ENCODE measurements at regions of chr3 and their contacts with region 1.

Region 1: GRCh38 chr3:73624821-73625665 is at the start of gene PDZRN3:
- DNase-seq: peak; percentile 71 to 78
- ATAC-seq: peak; percentile 40 to 56 (median 47)
- H3K4me3 ChIP-seq: peak within 1 kb of the TSS; percentile 81
- H3K27ac ChIP-seq: peak within 1 kb of the TSS; percentile 91
- H3K4me1 ChIP-seq: peaks cover 27% of the 10 kb centered on the region
- H3K27me3 ChIP-seq: no peaks in the 10 kb centered on the region
- CTCF ChIP-seq: no peak
- total RNA-seq, gene PDZRN3: 13.2 to 39.3 (median 17.2) TPM

Region 2: DNA sequence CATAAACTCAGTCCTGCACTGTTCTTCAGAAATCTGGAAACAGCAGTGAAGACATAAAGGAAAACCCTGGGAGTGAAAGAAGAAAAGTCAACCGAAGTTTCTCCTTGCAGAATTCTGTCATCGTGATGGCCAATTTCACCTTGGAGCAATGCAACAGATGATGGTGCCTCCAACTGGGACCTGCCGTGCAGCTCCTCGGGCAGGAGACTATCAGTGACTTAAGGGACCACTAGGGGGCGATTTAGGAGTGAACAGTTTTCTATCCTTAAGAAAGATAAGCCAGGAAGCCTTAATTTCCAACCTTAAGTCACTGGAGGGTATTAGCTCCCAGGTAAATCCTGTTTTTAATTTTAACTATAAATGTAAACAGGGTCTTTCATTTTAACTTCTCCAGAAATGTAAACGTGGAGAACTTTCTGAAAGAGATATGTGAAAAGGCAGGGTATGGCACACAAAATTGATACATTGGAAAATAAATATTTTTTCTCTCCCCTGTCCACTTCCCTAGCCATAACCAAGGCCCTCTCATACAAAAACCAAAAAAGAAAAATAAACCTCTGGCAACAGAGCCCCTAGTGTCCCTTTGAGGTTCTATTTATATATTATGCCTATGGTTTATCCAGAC is 116.6 kb before region 1 on chr3:
- intact Hi-C with region 1: loop called (anchors 2 to 5 kb)
- DNase-seq: no peak
- ATAC-seq: peak; percentile 71 to 85 (median 80)
- H3K4me3 ChIP-seq: no peak overlapping the region
- H3K27ac ChIP-seq: peak overlapping the region; percentile 70
- H3K4me1 ChIP-seq: peaks cover 58% of the 10 kb centered on the region
- H3K27me3 ChIP-seq: no peaks in the 10 kb centered on the region
- CTCF ChIP-seq: peak; percentile 81

Region 3: GRCh38 chr3:73569246-73569760 is 55.7 kb before region 1 on chr3:
- intact Hi-C with region 1: loop called in 1 of 2 experiments (anchors 5 kb)
- DNase-seq: no peak
- ATAC-seq: peak in 2 of 4 donors; percentile 11 to 16
- H3K4me3 ChIP-seq: no peak overlapping the region
- H3K27ac ChIP-seq: peak overlapping the region; percentile 80
- H3K4me1 ChIP-seq: peaks cover 46% of the 10 kb centered on the region
- H3K27me3 ChIP-seq: no peaks in the 10 kb centered on the region
- CTCF ChIP-seq: no peak

Region 4: GRCh38 chr3:73580343-73580742 is 44.7 kb before region 1 on chr3:
- intact Hi-C with region 1: loop called (anchors 5 kb)
- DNase-seq: no peak
- ATAC-seq: peak in 3 of 4 donors; percentile 43 to 59 (median 55)
- H3K4me3 ChIP-seq: no peak overlapping the region
- H3K27ac ChIP-seq: peak overlapping the region; percentile 70
- H3K4me1 ChIP-seq: peaks cover 71% of the 10 kb centered on the region
- H3K27me3 ChIP-seq: no peaks in the 10 kb centered on the region
- CTCF ChIP-seq: no peak

Region 5: DNA sequence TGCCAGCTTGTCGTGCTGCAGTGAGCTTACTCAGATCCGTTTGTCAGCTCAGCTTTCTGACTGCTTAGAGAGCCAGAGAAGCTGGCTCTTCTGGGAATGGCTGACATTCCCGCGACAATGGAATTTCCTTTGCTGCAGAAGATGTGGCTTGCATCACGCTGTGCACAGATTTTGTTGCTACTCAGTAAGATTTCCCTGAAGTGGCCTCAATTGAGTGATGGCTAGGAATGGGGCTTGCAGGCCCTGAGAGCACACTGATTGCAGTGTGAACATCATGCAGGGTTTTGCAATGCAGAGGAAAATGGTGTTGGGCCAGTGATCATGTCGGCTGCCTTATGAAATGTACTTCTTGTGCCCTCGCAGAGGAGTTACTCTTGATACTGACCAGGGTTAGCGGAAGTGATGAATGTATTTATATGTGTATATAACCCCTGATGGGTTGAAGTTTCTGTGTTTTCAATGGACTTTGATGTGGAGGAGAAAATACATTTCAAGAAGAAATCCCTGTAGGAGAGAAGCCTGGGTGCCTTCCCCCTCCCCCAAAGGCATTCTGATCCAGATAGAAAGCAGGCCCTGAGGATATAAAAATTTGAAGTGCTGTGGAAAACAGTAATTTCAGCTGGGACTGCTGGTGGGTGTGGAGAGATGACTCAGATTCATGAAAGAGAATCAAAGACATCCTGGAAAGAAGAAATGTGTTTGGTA is 102.2 kb after region 1 on chr3:
- intact Hi-C with region 1: loop called in 1 of 2 experiments (anchors 5 kb)
- DNase-seq: peak; percentile 46 to 50
- ATAC-seq: peak in 3 of 4 donors; percentile 51 to 68 (median 54)
- H3K4me3 ChIP-seq: no peak overlapping the region
- H3K27ac ChIP-seq: peak overlapping the region; percentile 60
- H3K4me1 ChIP-seq: peaks cover 36% of the 10 kb centered on the region
- H3K27me3 ChIP-seq: no peaks in the 10 kb centered on the region
- CTCF ChIP-seq: no peak

Region 6: GRCh38 chr3:73784686-73785392 is 159.8 kb after region 1 on chr3:
- intact Hi-C with region 1: loop called in 1 of 2 experiments (anchors 5 kb)
- DNase-seq: no peak
- ATAC-seq: peak; percentile 47 to 78 (median 58)
- H3K4me3 ChIP-seq: no peak overlapping the region
- H3K27ac ChIP-seq: peak overlapping the region; percentile 66
- H3K4me1 ChIP-seq: peaks cover 9% of the 10 kb centered on the region
- H3K27me3 ChIP-seq: no peaks in the 10 kb centered on the region
- CTCF ChIP-seq: no peak

Region 7: GRCh38 chr3:73848173-73848906 is 223.3 kb after region 1 on chr3:
- intact Hi-C with region 1: loop called (anchors 5 kb)
- DNase-seq: no peak
- ATAC-seq: peak in 3 of 4 donors; percentile 46 to 81 (median 62)
- H3K4me3 ChIP-seq: no peak overlapping the region
- H3K27ac ChIP-seq: no peak overlapping the region
- H3K4me1 ChIP-seq: no peaks in the 10 kb centered on the region
- H3K27me3 ChIP-seq: no peaks in the 10 kb centered on the region
- CTCF ChIP-seq: peak; percentile 79

Measured in psoas muscle (tissue), 8 donors.